ENCODE measurements at regions of chr6 and their contacts with region 1.

Region 1: DNA sequence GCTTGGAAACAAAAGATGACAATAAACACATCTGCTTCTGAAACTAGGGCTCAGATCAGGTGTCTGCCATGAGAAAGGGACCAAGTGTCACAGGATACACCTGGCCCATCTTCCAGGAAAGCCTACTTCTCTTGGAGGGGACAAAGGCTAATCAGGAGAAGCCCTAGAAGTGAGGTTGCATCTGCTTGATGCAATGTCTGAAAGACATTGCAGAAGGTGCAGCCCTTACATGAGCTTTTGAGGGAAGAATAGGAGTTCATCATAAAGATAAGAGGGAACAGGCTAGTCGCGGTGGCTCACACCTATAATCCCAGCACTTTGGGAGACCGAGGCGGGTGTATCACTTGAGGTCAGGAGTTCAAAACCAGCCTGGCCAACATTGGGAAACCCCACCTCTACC is 2.5 kb upstream of the BTN1A1 start:
- DNase-seq: no peak
- ATAC-seq: no peak
- H3K4me3 Mint-ChIP-seq: no peak overlapping the region
- H3K27ac Mint-ChIP-seq: no peak overlapping the region
- H3K4me1 Mint-ChIP-seq: peaks cover 15% of the 10 kb centered on the region
- H3K27me3 Mint-ChIP-seq: peaks cover 15% of the 10 kb centered on the region

Region 2: DNA sequence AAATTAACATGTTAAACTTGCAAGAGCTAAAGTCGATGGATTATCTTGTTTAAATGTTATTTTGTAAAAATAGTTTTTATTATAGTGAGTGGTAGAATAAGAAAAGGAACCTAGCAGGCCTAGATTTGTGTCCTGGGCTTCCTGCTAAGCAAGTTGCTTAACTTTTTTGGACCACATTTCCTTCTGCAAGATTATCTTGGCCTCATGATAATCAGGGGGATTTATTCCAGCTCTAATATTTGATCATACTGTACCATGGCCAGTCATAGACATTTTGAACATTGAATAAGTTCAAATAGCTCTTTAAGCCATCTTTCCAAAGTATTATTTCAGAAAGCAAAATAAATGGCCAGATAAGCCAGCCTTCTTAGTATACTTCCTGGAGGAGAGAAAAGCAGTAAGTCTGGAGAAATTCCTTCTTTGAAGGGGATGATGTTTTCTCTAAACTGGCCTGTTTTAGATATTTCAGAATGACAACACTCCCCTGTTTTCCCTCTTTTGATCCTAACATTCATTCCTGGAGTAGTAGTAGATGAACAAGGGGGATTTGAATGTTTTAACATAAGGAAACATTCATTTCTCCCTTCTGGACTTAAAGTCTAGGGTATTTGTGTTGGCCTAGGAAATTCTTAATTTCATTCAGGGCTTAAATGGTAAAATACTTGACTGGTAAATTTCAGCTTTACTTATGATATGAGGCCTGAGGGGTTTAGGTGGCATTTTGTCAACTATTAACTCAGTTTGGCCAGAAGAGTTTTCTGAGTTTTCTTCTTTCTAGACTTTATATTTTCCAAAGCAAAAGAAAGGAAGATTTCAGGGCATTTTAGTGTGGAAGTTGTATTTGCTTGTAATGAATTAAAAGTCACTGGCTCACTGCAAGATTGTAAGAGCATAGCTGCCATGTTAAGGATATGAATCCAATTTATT is 954.4 kb before region 1 on chr6:
- CTCF ChIA-PET with region 1: no interaction called
- POLR2A ChIA-PET with region 1: no interaction called
- intact Hi-C with region 1: no loop called
- DNase-seq: no peak
- ATAC-seq: no peak
- H3K4me3 Mint-ChIP-seq: no peak overlapping the region
- H3K27ac Mint-ChIP-seq: no peak overlapping the region
- H3K4me1 Mint-ChIP-seq: no peaks in the 10 kb centered on the region
- H3K27me3 Mint-ChIP-seq: no peaks in the 10 kb centered on the region

Region 3: GRCh38 chr6:26478985-26479278 is 18.7 kb before region 1 on chr6:
- CTCF ChIA-PET with region 1: interaction called, 4 read pairs
- POLR2A ChIA-PET with region 1: interaction called, 10 read pairs
- intact Hi-C with region 1: no loop called
- DNase-seq: no peak
- ATAC-seq: no peak
- H3K4me3 Mint-ChIP-seq: no peak overlapping the region
- H3K27ac Mint-ChIP-seq: no peak overlapping the region
- H3K4me1 Mint-ChIP-seq: peaks cover 26% of the 10 kb centered on the region
- H3K27me3 Mint-ChIP-seq: no peaks in the 10 kb centered on the region

Region 4: GRCh38 chr6:26553635-26554446 is 56.2 kb after region 1 on chr6:
- CTCF ChIA-PET with region 1: no interaction called
- POLR2A ChIA-PET with region 1: no interaction called
- intact Hi-C with region 1: no loop called
- DNase-seq: peak; percentile 89
- ATAC-seq: peak; percentile 58
- H3K4me3 Mint-ChIP-seq: no peak overlapping the region
- H3K27ac Mint-ChIP-seq: no peak overlapping the region
- H3K4me1 Mint-ChIP-seq: peaks cover 27% of the 10 kb centered on the region
- H3K27me3 Mint-ChIP-seq: no peaks in the 10 kb centered on the region

Region 5: DNA sequence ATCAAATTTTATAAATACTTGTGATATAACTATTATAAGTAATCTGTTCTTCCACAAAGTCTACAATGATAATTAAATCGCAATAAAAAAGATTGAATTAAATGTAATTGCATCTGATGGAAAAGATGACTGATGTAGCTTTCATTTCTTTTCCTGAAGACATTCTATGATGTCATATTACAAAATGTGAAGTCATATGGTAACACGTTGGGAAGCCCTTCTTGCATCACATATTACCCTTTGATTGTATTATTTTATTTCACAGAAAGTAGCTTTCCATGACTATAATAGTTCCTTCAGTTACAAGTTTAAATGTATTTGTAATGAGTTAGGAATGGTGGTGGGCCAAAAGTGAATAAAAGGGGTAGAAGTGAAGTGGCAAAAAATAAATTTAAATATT is 1433.6 kb after region 1 on chr6:
- CTCF ChIA-PET with region 1: no interaction called
- POLR2A ChIA-PET with region 1: no interaction called
- intact Hi-C with region 1: no loop called
- DNase-seq: no peak
- ATAC-seq: no peak
- H3K4me3 Mint-ChIP-seq: no peak overlapping the region
- H3K27ac Mint-ChIP-seq: no peak overlapping the region
- H3K4me1 Mint-ChIP-seq: no peaks in the 10 kb centered on the region
- H3K27me3 Mint-ChIP-seq: peaks cover 25% of the 10 kb centered on the region

Measured in activated CD4-positive, alpha-beta T cell treated with anti-CD3 and anti-CD28 coated beads for 36 hours (primary cell).